Posterior vena cava (tissue), 2 donors: ENCODE measurements at regions of chrX and their contacts with region 1.

Region 1: GRCh38 chrX:49165901-49166881 is 3.6 kb downstream of the MAGIX start:
- DNase-seq: peak; percentile 94

Region 2: DNA sequence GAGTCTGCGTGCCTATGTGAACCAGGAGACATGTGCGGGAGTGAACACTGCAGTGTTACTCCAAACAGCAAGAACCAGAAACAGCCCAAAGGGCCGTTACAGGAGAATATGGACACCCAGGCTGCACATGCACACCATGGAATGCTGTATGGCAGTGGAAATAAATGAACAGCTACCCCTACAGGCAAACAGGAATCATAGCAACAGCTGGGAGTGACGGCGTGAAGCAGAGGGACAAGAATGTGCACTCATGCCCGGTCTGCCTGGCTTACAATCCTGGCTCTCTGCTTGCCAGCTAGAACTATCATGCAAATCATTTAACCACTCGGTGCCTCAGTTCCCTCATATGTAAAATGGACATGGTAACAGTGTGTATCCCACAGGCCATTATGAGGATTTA is 59.3 kb before region 1 on chrX:
- intact Hi-C with region 1: no loop called
- DNase-seq: no peak

Region 3: DNA sequence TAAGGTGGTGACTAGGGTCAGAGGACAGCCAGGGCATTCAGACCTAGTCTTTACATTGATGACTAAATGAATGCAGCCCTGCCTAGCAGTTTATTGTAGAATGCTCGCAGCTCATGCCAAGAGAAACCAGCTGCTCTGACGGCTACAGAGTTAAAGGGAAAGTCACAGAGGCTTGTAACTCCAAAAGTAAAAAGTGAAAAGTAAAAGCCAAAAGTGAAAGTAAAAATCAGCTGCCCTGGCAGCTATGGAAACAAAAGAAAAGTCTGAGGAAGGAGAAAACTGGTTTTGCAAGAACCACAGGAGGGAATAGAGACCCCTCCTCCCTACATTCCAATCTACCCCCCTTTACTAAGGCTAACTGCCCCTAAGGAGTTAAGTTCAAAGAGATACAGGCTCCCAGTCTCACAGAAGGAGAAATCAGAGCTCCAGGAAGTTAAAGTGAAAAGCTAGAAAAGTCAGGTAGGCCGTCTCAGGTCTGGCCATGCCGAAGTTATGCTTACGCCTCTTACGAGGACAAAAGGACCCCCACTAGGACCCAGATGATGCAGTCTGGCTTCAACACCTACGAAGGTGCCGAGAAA is 143.3 kb after region 1 on chrX:
- intact Hi-C with region 1: no loop called
- DNase-seq: no peak

Region 4: GRCh38 chrX:49809891-49810632 is 643.9 kb after region 1 on chrX:
- intact Hi-C with region 1: loop called in 1 of 2 experiments (anchors 5 kb)
- DNase-seq: no peak